PC-3 (cell line): ENCODE measurements at regions of chr19 and their contacts with region 1.

Region 1: DNA sequence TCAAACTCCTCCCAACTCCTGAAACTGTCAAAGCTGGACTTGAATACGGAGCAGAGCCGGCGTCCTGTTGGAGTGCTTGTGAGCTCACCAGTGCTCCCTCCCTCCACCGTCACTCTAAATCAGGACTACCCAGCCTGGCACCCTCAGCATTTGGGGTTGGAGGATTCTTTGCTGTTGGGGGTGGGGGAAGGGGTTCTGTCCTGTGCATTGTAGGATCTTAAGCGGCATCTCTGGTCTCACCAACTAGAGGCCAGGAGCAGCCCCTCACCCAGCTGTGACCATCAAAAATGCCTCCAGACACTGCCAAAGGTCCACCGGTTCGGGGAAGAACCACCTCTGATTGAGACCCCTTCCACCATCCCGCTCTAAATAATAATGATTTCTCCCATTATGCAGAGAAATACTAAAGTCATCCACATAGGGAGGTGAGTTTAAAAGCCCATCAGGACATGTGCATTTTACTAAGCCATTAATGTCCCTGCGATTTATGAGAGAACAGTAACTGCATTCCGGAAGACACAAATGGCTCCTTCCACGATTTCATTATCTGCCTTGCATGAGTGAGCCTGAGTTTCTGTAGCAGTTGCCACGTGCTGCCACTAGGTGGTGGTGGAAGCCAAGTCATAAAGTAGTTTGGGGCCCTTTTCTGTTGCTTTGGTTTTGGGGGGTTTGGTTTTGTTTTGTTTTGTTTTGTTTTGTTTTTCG is 16.1 kb upstream of the USP29 start:
- DNase-seq: peak; percentile 85
- ATAC-seq: peak; percentile 87
- H3K4me3 ChIP-seq: peak overlapping the region; percentile 62
- H3K27ac ChIP-seq: no peak overlapping the region
- H3K4me1 ChIP-seq: no peaks in the 10 kb centered on the region
- H3K27me3 ChIP-seq: no peaks in the 10 kb centered on the region
- CTCF ChIP-seq: peak; percentile 96

Region 2: GRCh38 chr19:56252699-56253422 is 850.9 kb before region 1 on chr19:
- CTCF ChIA-PET with region 1: interaction called, 4 read pairs
- POLR2A ChIA-PET with region 1: no interaction called
- intact Hi-C with region 1: loop called (anchors 5 kb)
- DNase-seq: peak; percentile 73
- ATAC-seq: peak; percentile 67
- H3K4me3 ChIP-seq: no peak overlapping the region
- H3K27ac ChIP-seq: no peak overlapping the region
- H3K4me1 ChIP-seq: no peaks in the 10 kb centered on the region
- H3K27me3 ChIP-seq: no peaks in the 10 kb centered on the region
- CTCF ChIP-seq: peak; percentile 90